Sciatic nerve (tissue), 2 donors: ENCODE measurements at regions of chr1 and their contacts with region 1.

Region 1: DNA sequence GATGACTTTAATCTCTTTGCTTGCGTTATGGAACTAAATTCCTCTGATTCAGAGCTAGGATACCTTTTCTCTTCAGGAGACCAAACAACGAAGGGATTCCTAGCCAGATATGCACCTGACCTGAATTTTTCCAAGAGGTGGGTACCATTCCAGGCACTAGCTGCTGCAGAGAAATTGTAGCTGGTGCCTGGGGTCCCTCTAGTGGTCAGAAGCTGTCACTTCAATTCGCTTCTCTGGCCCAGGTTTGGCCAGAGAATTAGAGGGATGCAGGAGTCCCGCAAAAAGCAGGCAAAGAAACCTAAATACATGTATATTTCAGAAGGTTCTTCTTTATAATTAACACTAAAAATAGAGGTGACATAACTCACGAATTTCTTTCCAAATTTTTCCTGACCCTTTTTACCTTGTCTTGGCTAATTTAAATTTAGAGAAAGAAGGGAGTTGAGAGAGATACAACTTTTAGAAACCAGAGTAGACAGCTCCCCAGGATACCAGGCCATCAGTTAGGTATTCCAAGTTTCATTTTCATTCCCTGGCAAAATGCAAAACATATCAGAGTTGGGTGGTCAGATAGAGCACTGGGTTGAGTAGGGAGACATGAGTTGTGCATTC is 9.6 kb downstream of the ACKR1 start:
- DNase-seq: no peak
- ATAC-seq: peak; percentile 55

Region 2: DNA sequence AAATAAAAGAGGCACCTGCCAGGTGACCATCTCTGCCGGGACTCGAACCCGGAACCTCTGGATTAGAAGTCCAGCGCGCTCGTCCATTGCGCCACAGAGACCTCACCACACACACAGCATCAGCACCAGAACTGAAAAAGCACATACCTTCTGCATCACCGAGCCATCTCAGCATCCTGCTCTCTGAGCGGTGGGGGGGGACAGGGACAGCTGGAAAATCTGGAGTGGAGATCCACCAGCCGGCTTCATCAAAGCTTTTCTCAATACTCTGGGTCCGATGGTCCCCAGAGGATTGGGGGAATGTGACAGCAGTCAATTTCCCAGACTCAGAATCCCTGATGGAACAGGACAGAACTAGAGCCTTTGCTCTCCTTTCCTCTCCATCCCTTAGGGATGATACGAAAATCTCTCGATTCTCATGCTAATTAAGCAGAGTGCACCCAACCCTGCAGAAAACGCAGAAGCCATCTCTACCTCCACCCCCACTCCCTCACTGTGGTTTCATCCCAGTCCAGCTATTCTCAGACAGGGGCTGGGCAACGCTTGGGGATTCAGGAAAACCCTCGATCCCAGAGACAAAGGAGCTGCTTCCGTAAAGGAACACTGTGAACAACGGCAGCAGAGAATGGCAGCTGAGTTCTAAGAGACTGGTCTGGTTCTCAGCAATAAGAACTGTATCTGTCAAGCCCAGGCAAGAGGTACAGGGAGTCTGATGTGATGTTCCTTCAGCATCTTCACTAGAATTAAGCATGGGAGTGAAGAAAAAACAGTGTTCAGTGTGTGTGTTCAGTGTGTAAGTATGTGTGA is 72.5 kb before region 1 on chr1:
- intact Hi-C with region 1: loop called (anchors 10 kb)
- DNase-seq: no peak
- ATAC-seq: no peak

Region 3: DNA sequence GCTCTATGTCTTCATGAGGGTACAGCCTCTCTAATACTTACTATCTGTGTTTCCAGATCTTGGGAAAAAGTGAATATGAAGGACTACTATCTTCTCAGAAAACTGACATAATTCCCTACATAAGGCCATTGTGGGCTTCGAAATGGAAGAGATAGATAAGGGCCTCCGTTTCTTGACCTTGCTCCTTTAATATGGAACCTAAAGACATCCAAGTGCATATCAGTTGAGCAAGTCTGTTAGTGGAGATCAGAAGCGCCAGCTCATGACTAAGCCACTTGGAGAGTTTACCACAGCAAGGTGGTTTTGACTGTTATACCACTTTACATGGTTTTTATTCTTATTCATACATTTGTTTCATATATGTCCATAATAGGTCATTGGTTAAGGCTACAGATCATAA is 52.6 kb after region 1 on chr1:
- intact Hi-C with region 1: no loop called
- DNase-seq: no peak
- ATAC-seq: no peak

Region 4: GRCh38 chr1:161121834-161122233 is 1907.6 kb after region 1 on chr1:
- intact Hi-C with region 1: no loop called
- DNase-seq: no peak
- ATAC-seq: no peak